A673 (cell line): ENCODE measurements at regions of chr17 and their contacts with region 1.

Region 1: GRCh38 chr17:55710410-55710809 is 12.3 kb downstream of the TMEM100 start:
- DNase-seq: peak; percentile 74
- H3K4me3 ChIP-seq: no peak overlapping the region
- H3K27ac ChIP-seq: peak overlapping the region; percentile 23
- H3K4me1 ChIP-seq: peaks cover 43% of the 10 kb centered on the region
- H3K27me3 ChIP-seq: no peaks in the 10 kb centered on the region
- CTCF ChIP-seq: no peak

Region 2: DNA sequence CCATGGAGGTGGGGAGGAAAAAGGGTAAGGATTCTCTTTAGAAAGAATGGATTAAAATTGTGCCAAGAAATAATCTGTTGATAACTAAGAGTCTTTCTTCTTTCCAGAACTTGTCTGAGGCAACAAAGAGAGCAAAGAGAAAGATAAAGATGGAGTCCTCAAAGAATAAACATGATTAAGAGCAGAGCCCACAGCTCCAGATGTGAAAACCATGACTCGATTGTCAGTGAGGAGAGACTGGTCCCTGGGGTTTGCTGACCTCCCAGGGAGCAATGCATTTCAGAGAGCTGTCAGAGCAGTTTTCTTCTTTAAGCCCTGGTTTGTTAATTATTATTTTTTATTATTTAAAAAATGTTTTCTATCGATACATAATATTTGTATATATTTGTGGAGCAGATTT is 62.3 kb before region 1 on chr17:
- CTCF ChIA-PET with region 1: no interaction called
- POLR2A ChIA-PET with region 1: no interaction called
- intact Hi-C with region 1: loop called (anchors 5 kb)
- DNase-seq: peak; percentile 57
- H3K4me3 ChIP-seq: no peak overlapping the region
- H3K27ac ChIP-seq: peak overlapping the region; percentile 49
- H3K4me1 ChIP-seq: peaks cover 20% of the 10 kb centered on the region
- H3K27me3 ChIP-seq: no peaks in the 10 kb centered on the region
- CTCF ChIP-seq: no peak

Region 3: DNA sequence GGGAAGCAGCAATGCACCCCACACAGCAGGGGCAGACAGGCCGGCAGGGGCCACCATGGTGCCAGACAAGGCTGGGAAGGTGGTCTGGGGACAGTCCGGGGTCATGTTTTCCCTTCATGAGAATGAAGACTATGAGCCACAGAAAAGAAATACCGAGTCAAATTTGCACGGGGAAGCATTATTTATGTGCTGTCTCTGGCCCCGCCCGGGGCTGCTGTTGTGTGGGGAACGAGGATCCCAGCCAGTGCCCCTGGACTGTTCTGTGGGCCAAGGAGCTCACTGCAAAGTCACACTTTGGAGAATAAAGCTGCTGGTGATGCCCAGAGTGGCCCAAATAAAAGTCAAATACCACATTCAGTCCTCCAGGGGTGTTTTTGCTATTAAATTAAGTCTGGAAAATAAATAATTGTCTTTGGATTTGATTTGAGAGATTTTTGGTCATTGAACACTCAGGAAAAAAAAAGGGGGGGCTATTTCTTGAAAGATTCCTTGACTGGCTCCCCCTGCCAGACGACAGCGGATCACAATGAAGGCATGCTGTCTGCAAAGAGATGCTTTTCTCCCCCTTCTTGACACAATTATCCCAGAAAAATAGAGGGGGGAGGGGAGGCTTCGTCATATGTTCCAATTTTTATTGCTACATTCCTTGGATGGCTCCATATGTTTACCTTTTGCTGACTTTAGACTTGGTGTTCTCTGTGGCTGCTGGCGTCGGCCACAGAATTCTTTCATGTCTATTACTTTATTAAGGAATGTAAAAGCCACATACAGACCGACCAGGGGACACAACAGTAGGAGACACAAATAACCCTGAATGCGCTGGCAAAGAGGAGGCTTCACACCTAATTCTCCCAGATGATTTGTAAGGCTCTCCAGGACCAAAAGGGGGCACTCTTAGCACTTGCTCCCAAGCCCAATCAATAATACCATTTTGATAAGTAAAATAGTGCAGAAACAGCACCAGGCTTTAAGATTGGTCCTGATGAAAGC is 415.7 kb after region 1 on chr17:
- CTCF ChIA-PET with region 1: no interaction called
- POLR2A ChIA-PET with region 1: no interaction called
- intact Hi-C with region 1: no loop called
- DNase-seq: peak; percentile 43
- H3K4me3 ChIP-seq: no peak overlapping the region
- H3K27ac ChIP-seq: no peak overlapping the region
- H3K4me1 ChIP-seq: no peaks in the 10 kb centered on the region
- H3K27me3 ChIP-seq: peaks cover 36% of the 10 kb centered on the region
- CTCF ChIP-seq: peak; percentile 62